ENCODE measurements at regions of chr1 and their contacts with region 1.

Region 1: DNA sequence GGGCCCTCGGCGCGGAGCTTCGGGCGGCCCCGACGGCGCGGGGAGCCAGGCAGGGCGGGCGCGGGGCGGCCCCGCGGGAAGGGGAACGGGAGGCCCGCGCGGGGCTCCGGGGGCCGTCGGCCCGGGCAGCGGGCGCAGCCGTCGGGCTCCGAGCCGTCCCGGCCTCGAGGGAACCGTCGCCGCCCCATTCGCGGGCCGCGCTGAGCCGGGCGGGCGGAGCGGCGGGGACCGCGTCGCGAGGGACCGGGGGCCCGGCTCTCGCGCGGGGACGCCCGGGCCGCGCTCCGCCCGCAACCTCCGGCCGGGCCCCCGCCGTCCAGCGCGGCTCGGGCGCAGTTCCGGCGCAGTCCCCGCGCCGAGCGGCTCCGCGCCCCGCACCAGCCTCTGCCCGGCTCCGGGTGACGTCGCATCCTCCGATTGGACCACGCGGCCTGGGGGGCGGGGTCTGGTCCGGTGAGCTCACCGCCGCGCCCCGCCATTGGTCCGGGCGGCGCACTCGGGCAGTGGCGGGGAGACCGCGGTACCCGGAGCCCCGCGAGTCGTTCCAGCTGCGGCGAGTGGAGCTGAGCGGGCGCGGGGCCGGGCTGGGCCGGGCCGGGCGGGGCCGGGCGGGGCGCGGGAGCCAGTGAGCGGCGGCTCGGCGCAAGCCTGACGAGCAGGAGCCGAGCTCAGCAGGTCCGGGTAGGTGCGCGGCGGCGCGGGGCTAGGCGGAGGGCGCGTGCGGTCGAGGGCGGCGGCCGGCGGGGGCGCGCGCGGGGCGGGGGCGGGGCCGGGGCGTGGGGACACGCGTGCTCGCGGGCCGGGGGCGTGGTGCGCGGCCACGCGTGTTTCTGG is 66.7 kb upstream of the VAMP3 start:
- DNase-seq: peak; percentile 76 to 96 (median 88)
- ATAC-seq: peak; percentile 98
- H3K4me3 ChIP-seq: no peak overlapping the region
- H3K4me3 Mint-ChIP-seq: peak overlapping the region in 6 of 10 donors; percentile 39 to 87 (median 78)
- H3K27ac ChIP-seq: no peak overlapping the region
- H3K27ac Mint-ChIP-seq: peak overlapping the region in 1 of 9 donors; percentile 85
- H3K4me1 ChIP-seq: peaks cover under 1 to 8% of the 10 kb centered on the region in 2 donors
- H3K4me1 Mint-ChIP-seq: peaks cover 4 to 26% (median 11%) of the 10 kb centered on the region in 7 donors
- H3K27me3 ChIP-seq: peaks cover 0 to 23% of the 10 kb centered on the region in 2 donors
- H3K27me3 Mint-ChIP-seq: peaks cover 41 to 74% (median 44%) of the 10 kb centered on the region in 5 donors

Region 2: GRCh38 chr1:7680207-7680954 is 24.1 kb before region 1 on chr1:
- CTCF ChIA-PET with region 1: no interaction called
- POLR2A ChIA-PET with region 1: no interaction called
- intact Hi-C with region 1: loop called in 1 of 2 experiments (anchors 1 kb)
- DNase-seq: peak in 7 of 9 donors; percentile 29 to 55 (median 49)
- ATAC-seq: peak; percentile 79
- H3K4me3 ChIP-seq: peak overlapping the region; percentile 75
- H3K4me3 Mint-ChIP-seq: peak overlapping the region; percentile 57 to 84 (median 78)
- H3K27ac ChIP-seq: no peak overlapping the region
- H3K27ac Mint-ChIP-seq: peak overlapping the region in 1 of 9 donors; percentile 48
- H3K4me1 ChIP-seq: no peaks in the 10 kb centered on the region
- H3K4me1 Mint-ChIP-seq: peaks cover 0 to 4% (median 0%) of the 10 kb centered on the region in 7 donors
- H3K27me3 ChIP-seq: no peaks in the 10 kb centered on the region
- H3K27me3 Mint-ChIP-seq: peaks cover 0 to 18% (median 0%) of the 10 kb centered on the region in 5 donors

Region 3: GRCh38 chr1:7783826-7784491 is 79.5 kb after region 1 on chr1 and contains the start of gene PER3:
- CTCF ChIA-PET with region 1: no interaction called
- POLR2A ChIA-PET with region 1: no interaction called
- intact Hi-C with region 1: loop called in 1 of 2 experiments (anchors 2 kb)
- DNase-seq: peak; percentile 84 to 97 (median 94)
- ATAC-seq: peak; percentile 93
- H3K4me3 ChIP-seq: peak within 1 kb of the TSS; percentile 58
- H3K4me3 Mint-ChIP-seq: peak within 1 kb of the TSS; percentile 67 to 85 (median 76)
- H3K27ac ChIP-seq: peak within 1 kb of the TSS; percentile 99
- H3K27ac Mint-ChIP-seq: peak within 1 kb of the TSS in 8 of 9 donors; percentile 63 to 91 (median 82)
- H3K4me1 ChIP-seq: peaks cover 8 to 17% of the 10 kb centered on the region in 2 donors
- H3K4me1 Mint-ChIP-seq: peaks cover 18 to 39% (median 28%) of the 10 kb centered on the region in 7 donors
- H3K27me3 ChIP-seq: no peaks in the 10 kb centered on the region
- H3K27me3 Mint-ChIP-seq: peaks cover 0 to 16% (median 0%) of the 10 kb centered on the region in 5 donors
- total RNA-seq, gene PER3: 2.2 to 10.4 (median 5.1) TPM

Measured in naive thymus-derived CD4-positive, alpha-beta T cell (primary cell).